Left colon (tissue), 2 donors: ENCODE measurements at regions of chr2 and their contacts with region 1.

Region 1: GRCh38 chr2:64859312-64860212 is 129.6 kb upstream of the SLC1A4 start:
- DNase-seq: peak; percentile 93 to 97
- ATAC-seq: peak; percentile 93

Region 2: GRCh38 chr2:64653349-64654062 is 206.1 kb before region 1 on chr2 and contains the start of gene SERTAD2:
- intact Hi-C with region 1: loop called (anchors 5 to 10 kb)
- DNase-seq: peak; percentile 89 to 92
- ATAC-seq: peak; percentile 77
- total RNA-seq, gene SERTAD2: 16.0 to 20.5 TPM

Region 3: DNA sequence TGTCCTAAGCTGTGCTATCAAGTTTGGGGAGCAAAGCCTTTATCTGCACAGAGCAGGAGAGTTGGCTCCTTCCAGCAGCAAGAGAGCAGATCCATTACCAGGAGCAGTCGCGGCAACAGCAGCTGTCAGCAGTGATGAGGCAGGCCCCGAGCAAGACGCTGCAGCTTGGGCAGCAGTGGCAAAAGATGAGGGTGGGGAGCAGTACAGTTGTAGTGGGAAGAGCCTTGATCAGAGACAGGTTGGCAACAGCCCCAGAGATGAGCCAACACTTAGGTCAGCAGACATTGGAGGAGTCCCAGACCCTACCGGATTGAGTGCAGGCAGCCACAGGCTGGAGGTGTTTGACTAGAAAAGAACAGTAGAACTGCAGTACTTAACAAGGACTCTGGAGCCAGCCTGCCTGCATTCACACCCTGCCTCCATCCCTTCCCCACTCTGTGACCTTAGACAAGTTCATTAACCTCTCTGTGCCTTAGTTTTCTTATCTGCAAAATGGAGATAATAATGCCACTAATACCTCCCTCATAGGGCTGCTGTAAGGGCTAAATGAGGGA is 88.7 kb before region 1 on chr2:
- intact Hi-C with region 1: loop called in 1 of 2 experiments (anchors 5 kb)
- DNase-seq: peak; percentile 37 to 74
- ATAC-seq: no peak

Region 4: GRCh38 chr2:65096948-65097347 is 237.4 kb after region 1 on chr2:
- intact Hi-C with region 1: no loop called
- DNase-seq: no peak
- ATAC-seq: no peak

Region 5: DNA sequence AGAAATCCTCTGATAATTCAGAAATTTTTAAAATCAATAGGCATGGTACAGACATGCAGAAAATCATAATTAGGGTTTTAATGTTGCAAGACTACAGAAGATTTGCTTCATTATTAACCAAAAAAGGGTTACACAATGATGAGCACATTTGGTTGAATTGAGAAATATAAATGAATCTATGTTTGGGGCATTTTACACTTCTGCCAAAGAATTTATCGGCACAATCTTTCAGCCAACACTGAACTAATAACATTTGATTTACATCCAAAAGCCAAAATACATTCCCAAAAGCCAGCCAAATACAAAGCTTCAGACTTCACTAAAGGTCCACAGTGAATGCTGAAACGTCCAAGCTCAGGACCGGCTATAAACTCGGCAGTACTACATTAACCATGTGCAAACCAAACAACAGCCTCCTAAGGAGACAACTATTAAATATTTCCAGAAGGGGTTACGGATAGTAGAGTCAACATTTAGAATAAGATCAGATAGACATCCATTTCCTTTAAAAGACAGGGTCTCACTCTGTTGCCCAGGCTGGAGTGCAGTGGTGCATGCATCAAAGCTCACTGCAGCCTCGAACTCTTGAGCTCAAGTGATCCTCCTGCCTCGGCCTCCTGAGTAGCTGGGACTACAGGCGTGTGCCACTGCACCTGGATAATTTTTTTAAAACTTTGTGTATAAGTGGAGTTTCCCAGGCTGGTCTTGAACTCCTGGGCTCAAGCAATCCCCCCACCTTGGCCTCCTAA is 543.4 kb after region 1 on chr2:
- intact Hi-C with region 1: no loop called
- DNase-seq: no peak
- ATAC-seq: no peak

Region 6: DNA sequence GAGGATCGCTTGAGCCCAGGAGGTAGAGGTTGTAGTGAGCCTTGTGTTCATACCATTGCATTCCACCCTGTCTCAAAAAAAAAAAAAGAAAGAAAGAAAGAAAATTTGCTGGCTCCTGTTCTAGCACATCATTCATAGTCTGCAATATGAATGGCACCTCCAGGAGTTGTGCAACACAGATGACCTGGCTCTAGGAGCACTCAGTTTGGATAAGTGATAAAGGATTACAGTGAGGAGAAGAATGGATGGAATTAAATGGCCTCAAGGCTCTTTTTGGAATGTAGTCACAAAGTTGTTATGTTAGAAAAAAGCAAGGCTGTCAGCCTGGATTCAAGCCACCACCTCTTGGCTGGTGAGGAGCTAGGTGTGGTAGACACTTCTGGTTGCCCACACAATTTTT is 594.4 kb after region 1 on chr2:
- intact Hi-C with region 1: no loop called
- DNase-seq: no peak
- ATAC-seq: no peak